OCI-LY7 (cell line): ENCODE measurements at regions of chr4 and their contacts with region 1.

Region 1: GRCh38 chr4:119570401-119570800 is 58.2 kb downstream of the PDE5A start:
- DNase-seq: no peak
- H3K4me3 ChIP-seq: no peak overlapping the region
- H3K27ac ChIP-seq: no peak overlapping the region
- H3K4me1 ChIP-seq: no peaks in the 10 kb centered on the region
- CTCF ChIP-seq: no peak

Region 2: GRCh38 chr4:120049732-120050494 is 479.5 kb after region 1 on chr4:
- CTCF ChIA-PET with region 1: no interaction called
- POLR2A ChIA-PET with region 1: no interaction called
- intact Hi-C with region 1: loop called (anchors 5 kb)
- DNase-seq: peak; percentile 73
- H3K4me3 ChIP-seq: no peak overlapping the region
- H3K27ac ChIP-seq: no peak overlapping the region
- H3K4me1 ChIP-seq: peaks cover 13% of the 10 kb centered on the region
- CTCF ChIP-seq: peak; percentile 92